Common myeloid progenitor, CD34-positive (primary cell): ENCODE measurements at regions of chr16 and their contacts with region 1.

Region 1: DNA sequence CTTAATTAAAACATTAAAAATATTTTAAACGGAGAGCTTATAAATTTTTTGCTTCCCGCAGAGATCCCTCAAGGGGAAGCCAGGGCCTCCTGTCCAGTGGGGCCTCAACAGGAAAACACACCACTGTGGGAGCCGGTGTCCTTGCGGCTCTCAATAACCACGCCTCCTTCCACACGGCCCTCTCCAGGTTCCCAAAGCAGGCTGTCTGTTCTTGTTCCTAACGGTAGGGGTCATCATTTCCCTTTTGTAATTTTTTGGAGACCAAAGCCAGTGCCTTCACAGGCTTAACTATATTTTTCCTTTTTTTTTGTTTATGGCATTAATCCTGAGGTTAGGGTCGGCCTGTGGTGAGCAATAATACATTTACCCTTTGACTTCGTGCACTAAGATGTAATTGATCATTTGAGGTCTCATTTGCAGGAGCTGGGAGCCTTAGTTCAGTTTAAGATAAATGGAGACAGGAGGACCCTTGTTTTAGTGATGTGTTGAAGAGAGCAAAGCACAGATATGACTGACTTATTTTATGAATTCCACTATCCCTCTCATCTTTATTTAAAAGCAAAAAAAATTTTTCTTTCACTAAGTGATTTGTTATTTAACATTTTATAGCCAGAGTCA is 77.5 kb upstream of the N4BP1 start:
- DNase-seq: peak; percentile 57 to 65 (median 62)
- H3K4me3 ChIP-seq: no peak overlapping the region
- H3K27ac ChIP-seq: no peak overlapping the region
- H3K4me1 ChIP-seq: peaks cover 0 to 4% (median 2%) of the 10 kb centered on the region in 4 experiments
- H3K27me3 ChIP-seq: no peaks in the 10 kb centered on the region

Region 2: GRCh38 chr16:48385272-48386150 is 302.0 kb before region 1 on chr16 and contains the start of gene SIAH1:
- CTCF ChIA-PET with region 1: no interaction called
- POLR2A ChIA-PET with region 1: no interaction called
- DNase-seq: peak; percentile 78 to 89 (median 88)
- H3K4me3 ChIP-seq: peak within 1 kb of the TSS; percentile 79 to 99 (median 88)
- H3K27ac ChIP-seq: peak within 1 kb of the TSS; percentile 78 to 89
- H3K4me1 ChIP-seq: peaks cover 12 to 24% (median 17%) of the 10 kb centered on the region in 4 experiments
- H3K27me3 ChIP-seq: no peaks in the 10 kb centered on the region

Region 3: DNA sequence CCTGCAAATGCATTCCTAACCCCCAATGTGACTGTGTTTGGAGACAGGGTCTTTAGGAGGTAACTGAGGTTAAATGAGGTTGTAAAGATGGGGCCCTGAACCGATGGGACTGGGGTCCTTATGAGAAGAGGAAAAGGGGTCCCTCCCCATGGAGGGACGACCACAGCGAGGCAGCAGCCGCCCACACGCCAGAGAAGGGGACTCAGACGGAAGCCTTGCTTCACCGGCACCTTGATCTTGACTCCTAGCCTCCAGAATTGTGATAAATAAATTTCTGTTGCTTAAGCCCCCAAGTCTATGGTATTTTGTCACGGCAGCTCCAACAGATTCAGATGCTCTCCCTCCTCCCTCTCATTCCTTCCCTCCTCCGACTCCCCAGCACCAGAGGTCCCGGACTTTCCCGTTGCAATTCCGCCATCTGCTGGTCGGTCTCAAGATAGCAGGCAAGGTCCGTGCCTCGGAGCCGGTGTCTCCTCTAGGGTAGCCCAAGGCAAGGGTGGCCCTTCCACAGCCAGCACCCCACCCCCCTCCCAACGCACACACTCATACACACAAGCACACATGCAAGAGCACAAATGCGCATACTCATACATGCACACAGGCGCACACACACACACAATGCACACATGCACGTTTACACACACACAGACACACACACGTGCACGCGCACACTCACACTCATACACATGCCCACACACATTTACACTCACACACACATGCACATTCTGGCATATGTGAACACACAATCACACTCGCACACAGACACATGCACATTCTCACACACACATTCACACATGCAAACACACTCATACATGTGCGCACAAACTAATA is 663.0 kb after region 1 on chr16:
- CTCF ChIA-PET with region 1: interaction called, 14 read pairs
- POLR2A ChIA-PET with region 1: no interaction called
- DNase-seq: peak; percentile 32 to 62 (median 50)
- H3K4me3 ChIP-seq: no peak overlapping the region
- H3K27ac ChIP-seq: no peak overlapping the region
- H3K4me1 ChIP-seq: peaks cover 0 to 5% (median 0%) of the 10 kb centered on the region in 4 experiments
- H3K27me3 ChIP-seq: peaks cover 0 to 42% (median 0%) of the 10 kb centered on the region in 5 experiments